ENCODE measurements at regions of chr4 and their contacts with region 1.

Region 1: GRCh38 chr4:16516796-16517439 is 290.6 kb upstream of the TAPT1 start:
- DNase-seq: no peak
- H3K4me3 ChIP-seq: no peak overlapping the region
- H3K27ac ChIP-seq: no peak overlapping the region
- H3K4me1 ChIP-seq: no peaks in the 10 kb centered on the region
- H3K27me3 ChIP-seq: no peaks in the 10 kb centered on the region
- CTCF ChIP-seq: no peak

Region 2: GRCh38 chr4:15765910-15766697 is 750.8 kb before region 1 on chr4:
- CTCF ChIA-PET with region 1: no interaction called
- POLR2A ChIA-PET with region 1: interaction called, 21 read pairs
- intact Hi-C with region 1: no loop called
- DNase-seq: no peak
- H3K4me3 ChIP-seq: no peak overlapping the region
- H3K27ac ChIP-seq: no peak overlapping the region
- H3K4me1 ChIP-seq: no peaks in the 10 kb centered on the region
- H3K27me3 ChIP-seq: no peaks in the 10 kb centered on the region
- CTCF ChIP-seq: no peak

Region 3: DNA sequence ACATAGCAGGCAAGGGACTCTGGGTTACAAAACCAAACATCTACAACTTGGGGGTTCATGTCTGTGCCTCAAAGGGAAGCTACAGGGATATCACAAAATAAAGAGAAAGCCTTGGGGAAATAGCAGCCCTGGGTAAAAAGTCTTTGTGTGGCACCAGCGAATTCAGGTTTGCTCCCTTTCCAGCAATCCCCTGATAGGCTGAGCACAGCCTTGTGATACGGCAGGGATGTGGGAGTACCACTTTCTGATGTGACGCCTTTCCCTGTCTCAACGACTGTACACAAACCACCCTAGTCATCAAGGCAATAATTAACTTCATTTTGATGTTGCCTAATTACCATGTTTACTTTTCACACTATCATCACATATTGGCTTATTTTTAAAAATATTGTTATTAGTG is 216.6 kb after region 1 on chr4:
- CTCF ChIA-PET with region 1: no interaction called
- POLR2A ChIA-PET with region 1: no interaction called
- intact Hi-C with region 1: no loop called
- DNase-seq: no peak
- H3K4me3 ChIP-seq: no peak overlapping the region
- H3K27ac ChIP-seq: no peak overlapping the region
- H3K4me1 ChIP-seq: no peaks in the 10 kb centered on the region
- H3K27me3 ChIP-seq: peaks cover 17% of the 10 kb centered on the region; the same call in 1 of the 2 replicates
- CTCF ChIP-seq: no peak